Caco-2 (cell line): ENCODE measurements at regions of chr2 and their contacts with region 1.

Region 1: DNA sequence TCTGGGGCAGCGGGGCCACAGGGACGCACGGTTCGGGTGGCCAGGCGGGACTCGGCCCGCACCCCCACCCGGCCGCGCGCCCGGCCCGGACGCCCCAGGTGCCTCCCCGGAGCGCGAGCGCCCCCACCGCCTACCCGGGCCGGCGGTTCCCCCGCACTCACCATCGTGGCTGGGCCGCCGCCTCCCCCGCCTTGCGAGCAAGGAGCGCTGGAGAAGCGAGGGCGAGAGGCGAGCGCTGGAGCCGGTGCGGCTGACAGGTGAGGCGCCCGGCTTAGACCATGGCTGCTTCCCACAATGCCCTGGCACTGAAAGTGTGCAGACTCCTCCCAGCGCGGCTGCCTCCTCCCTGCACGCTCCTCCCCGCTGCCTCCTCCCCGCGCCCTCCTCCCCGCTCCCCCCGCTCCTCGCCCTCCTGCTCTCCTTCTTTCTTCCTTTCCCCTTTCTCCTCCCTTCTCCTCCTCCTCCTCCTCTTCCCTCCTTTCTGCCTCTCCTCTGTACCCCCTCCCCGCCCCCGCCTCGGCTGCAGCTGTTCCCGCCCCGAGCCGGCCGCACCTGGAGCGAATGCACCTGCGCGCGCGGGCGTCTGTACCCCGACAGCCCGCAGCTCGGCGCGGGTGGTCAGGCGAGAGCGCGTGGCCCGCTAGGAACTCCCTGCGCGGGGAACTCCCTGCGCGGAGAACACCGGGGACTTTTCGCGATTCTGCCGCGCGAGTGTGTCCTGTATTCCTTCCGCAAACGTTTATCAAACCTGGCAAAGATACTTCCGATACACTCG is at the start of gene AP1S3:
- DNase-seq: peak; percentile 97 to 98
- H3K4me3 ChIP-seq: peak within 1 kb of the TSS; percentile 80
- H3K4me3 Mint-ChIP-seq: peak within 1 kb of the TSS; percentile 90
- H3K27ac Mint-ChIP-seq: peak within 1 kb of the TSS; percentile 75
- H3K4me1 ChIP-seq: peaks cover 40% of the 10 kb centered on the region
- H3K4me1 Mint-ChIP-seq: peaks cover 48% of the 10 kb centered on the region
- H3K27me3 ChIP-seq: no peaks in the 10 kb centered on the region
- H3K27me3 Mint-ChIP-seq: no peaks in the 10 kb centered on the region
- CTCF ChIP-seq: peak in 1 of 2 experiments; percentile 21
- total RNA-seq, gene AP1S3: 180 TPM in 2 replicates

Region 2: GRCh38 chr2:222641336-222641735 is 1196.1 kb before region 1 on chr2:
- CTCF ChIA-PET with region 1: no interaction called
- POLR2A ChIA-PET with region 1: no interaction called
- intact Hi-C with region 1: no loop called
- DNase-seq: no peak
- H3K4me3 ChIP-seq: no peak overlapping the region
- H3K4me3 Mint-ChIP-seq: no peak overlapping the region
- H3K27ac Mint-ChIP-seq: no peak overlapping the region
- H3K4me1 ChIP-seq: no peaks in the 10 kb centered on the region
- H3K4me1 Mint-ChIP-seq: no peaks in the 10 kb centered on the region
- H3K27me3 ChIP-seq: no peaks in the 10 kb centered on the region
- H3K27me3 Mint-ChIP-seq: no peaks in the 10 kb centered on the region
- CTCF ChIP-seq: no peak

Region 3: DNA sequence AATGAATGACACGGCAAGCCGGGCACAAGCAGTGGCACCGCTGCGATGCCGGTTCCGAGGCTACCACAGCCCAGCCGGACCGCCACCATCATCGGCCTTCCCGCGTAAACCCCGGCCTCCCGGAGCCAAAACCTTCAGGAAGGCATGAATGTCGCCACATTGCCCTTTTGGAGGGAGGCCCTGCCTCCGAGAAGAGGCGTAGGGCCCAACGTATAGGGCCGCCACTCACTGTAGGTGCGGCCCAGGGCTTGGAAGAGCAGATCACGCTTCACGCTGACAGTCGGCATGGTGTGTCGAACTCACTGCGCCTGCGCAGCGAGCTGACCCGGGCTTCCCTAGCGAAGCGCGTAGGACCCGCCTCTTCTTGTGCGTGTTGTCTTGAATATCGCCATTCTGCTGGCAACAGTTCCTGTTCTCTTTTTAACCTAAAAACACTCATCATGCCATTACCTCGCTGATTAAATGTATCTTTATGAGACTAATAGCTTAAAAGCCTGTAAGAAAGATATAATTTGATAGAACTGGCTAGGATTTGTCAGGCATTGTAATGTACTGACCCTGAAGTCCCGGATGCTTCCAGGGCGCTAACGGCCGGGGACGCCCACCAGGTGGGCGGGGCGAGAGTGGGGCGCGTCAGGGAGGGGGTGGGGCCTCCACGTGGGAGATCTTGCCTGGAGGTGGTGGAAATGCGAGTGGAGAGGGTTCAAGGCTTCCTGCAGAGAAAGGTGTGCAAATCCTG is 1181.5 kb before region 1 on chr2 and contains the start of gene FARSB:
- CTCF ChIA-PET with region 1: no interaction called
- POLR2A ChIA-PET with region 1: no interaction called
- intact Hi-C with region 1: loop called (anchors 1 kb)
- DNase-seq: peak; percentile 97 to 98
- H3K4me3 ChIP-seq: peak within 1 kb of the TSS; percentile 96
- H3K4me3 Mint-ChIP-seq: peak within 1 kb of the TSS; percentile 92
- H3K27ac Mint-ChIP-seq: peak within 1 kb of the TSS; percentile 95
- H3K4me1 ChIP-seq: peaks cover 5% of the 10 kb centered on the region; the same call in 1 of the 2 replicates
- H3K4me1 Mint-ChIP-seq: peaks cover 13% of the 10 kb centered on the region
- H3K27me3 ChIP-seq: no peaks in the 10 kb centered on the region
- H3K27me3 Mint-ChIP-seq: no peaks in the 10 kb centered on the region
- CTCF ChIP-seq: no peak
- total RNA-seq, gene FARSB: 48.9 and 50.9 TPM in 2 replicates

Region 4: DNA sequence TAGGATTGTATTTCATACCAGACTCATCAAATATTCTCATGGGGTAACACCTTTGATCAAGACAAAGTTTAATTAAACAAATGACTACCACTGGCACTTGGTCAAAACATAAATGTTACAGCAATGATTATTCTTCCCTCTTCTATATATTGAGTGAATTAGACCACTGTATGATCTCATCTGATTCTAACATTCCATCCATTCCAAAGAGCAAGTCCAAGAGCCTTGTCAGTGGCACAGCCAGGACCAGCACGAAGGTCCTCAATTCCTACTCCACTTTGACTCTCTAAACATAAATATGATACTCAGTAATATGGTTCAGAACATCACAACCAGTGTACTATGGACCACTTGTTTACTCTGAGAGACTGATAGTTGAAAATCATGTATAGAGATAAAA is 86.5 kb before region 1 on chr2:
- CTCF ChIA-PET with region 1: no interaction called
- POLR2A ChIA-PET with region 1: no interaction called
- intact Hi-C with region 1: no loop called
- DNase-seq: no peak
- H3K4me3 ChIP-seq: no peak overlapping the region
- H3K4me3 Mint-ChIP-seq: no peak overlapping the region
- H3K27ac Mint-ChIP-seq: no peak overlapping the region
- H3K4me1 ChIP-seq: peaks cover 13% of the 10 kb centered on the region
- H3K4me1 Mint-ChIP-seq: peaks cover 14% of the 10 kb centered on the region
- H3K27me3 ChIP-seq: no peaks in the 10 kb centered on the region
- H3K27me3 Mint-ChIP-seq: no peaks in the 10 kb centered on the region
- CTCF ChIP-seq: no peak

Region 5: GRCh38 chr2:223779877-223780276 is 57.6 kb before region 1 on chr2:
- CTCF ChIA-PET with region 1: interaction called, 3 read pairs
- POLR2A ChIA-PET with region 1: no interaction called
- intact Hi-C with region 1: loop called (anchors 5 kb)
- DNase-seq: peak; percentile 78 to 81
- H3K4me3 ChIP-seq: no peak overlapping the region
- H3K4me3 Mint-ChIP-seq: no peak overlapping the region
- H3K27ac Mint-ChIP-seq: no peak overlapping the region
- H3K4me1 ChIP-seq: peaks cover 5% of the 10 kb centered on the region; the same call in 1 of the 2 replicates
- H3K4me1 Mint-ChIP-seq: peaks cover 20% of the 10 kb centered on the region
- H3K27me3 ChIP-seq: no peaks in the 10 kb centered on the region
- H3K27me3 Mint-ChIP-seq: no peaks in the 10 kb centered on the region
- CTCF ChIP-seq: peak; percentile 40 to 56

Region 6: DNA sequence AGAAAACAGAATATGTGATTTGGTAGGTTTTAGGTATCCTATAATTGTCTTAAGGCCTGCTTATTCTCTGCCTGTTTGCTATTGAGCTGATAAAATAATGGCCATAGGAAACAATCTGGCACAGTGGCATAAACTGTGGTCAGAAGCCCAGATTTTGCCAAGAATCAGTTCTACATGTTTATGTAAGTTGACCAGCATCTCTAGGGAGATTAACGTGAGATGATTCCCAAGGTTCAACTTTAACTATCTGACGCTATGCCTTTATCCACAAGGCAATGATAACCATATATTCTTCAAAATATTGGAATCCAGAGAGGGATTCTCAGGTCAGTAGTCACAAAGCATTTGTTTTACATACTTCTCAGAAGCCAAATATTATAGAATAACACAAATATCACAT is 25.7 kb before region 1 on chr2:
- CTCF ChIA-PET with region 1: no interaction called
- POLR2A ChIA-PET with region 1: no interaction called
- intact Hi-C with region 1: no loop called
- DNase-seq: no peak
- H3K4me3 ChIP-seq: no peak overlapping the region
- H3K4me3 Mint-ChIP-seq: no peak overlapping the region
- H3K27ac Mint-ChIP-seq: no peak overlapping the region
- H3K4me1 ChIP-seq: peaks cover 16% of the 10 kb centered on the region
- H3K4me1 Mint-ChIP-seq: peaks cover 23% of the 10 kb centered on the region
- H3K27me3 ChIP-seq: no peaks in the 10 kb centered on the region
- H3K27me3 Mint-ChIP-seq: no peaks in the 10 kb centered on the region
- CTCF ChIP-seq: no peak

Region 7: DNA sequence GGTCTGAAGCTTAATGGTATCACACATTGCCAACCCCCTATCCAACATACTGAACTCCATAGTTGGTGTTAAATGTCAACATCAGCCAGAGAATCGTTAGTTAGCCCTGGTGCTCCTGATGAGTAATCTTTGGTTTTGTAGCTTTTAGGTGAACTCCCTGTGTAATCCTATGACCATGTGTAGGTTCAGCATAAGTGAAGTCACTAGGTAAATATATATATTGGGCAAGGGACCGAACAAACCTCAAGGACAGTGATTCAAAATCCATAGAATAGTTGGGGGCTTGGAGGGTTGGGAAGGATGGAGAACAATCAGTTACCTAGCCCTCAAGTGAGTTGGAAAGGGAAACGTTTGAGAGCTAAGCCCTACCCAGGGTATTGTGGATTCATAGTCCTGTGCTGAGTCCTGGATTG is 16.0 kb after region 1 on chr2:
- CTCF ChIA-PET with region 1: interaction called, 14 read pairs
- POLR2A ChIA-PET with region 1: interaction called, 6 read pairs
- intact Hi-C with region 1: loop called (anchors 1 kb)
- DNase-seq: no peak
- H3K4me3 ChIP-seq: no peak overlapping the region
- H3K4me3 Mint-ChIP-seq: peak overlapping the region; percentile 36
- H3K27ac Mint-ChIP-seq: peak overlapping the region; percentile 84
- H3K4me1 ChIP-seq: peaks cover 80% of the 10 kb centered on the region
- H3K4me1 Mint-ChIP-seq: peaks cover 70% of the 10 kb centered on the region
- H3K27me3 ChIP-seq: no peaks in the 10 kb centered on the region
- H3K27me3 Mint-ChIP-seq: no peaks in the 10 kb centered on the region
- CTCF ChIP-seq: no peak